K562 (cell line): ENCODE measurements at regions of chr15 and their contacts with region 1.

Region 1: GRCh38 chr15:88664151-88664778 is 25.4 kb downstream of the ISG20 start:
- DNase-seq: no peak
- ATAC-seq: peak; percentile 51; the same call in 1 of the 3 replicates
- H3K4me3 ChIP-seq: no peak overlapping the region
- H3K27ac ChIP-seq: no peak overlapping the region
- H3K4me1 ChIP-seq: no peaks in the 10 kb centered on the region
- H3K27me3 ChIP-seq: peaks cover 4 to 21% of the 10 kb centered on the region in 2 experiments; a peak in 4 of 5 replicates
- CTCF ChIP-seq: peak in 2 of 3 experiments; percentile 22 to 34; a peak in 1 of 6 replicates
- EP300 ChIP-seq: no peak
- POLR2A ChIP-seq: no peak
- RAD21 ChIP-seq: peak in 1 of 2 experiments; percentile 51; a peak in 2 of 4 replicates

Region 2: GRCh38 chr15:88828791-88829190 is 164.5 kb after region 1 on chr15:
- CTCF ChIA-PET with region 1: no interaction called
- POLR2A ChIA-PET with region 1: no interaction called
- in situ Hi-C with region 1: loop called (anchors 10 kb)
- intact Hi-C with region 1: no loop called
- DNase-seq: no peak
- ATAC-seq: no peak
- H3K4me3 ChIP-seq: no peak overlapping the region
- H3K27ac ChIP-seq: no peak overlapping the region
- H3K4me1 ChIP-seq: no peaks in the 10 kb centered on the region
- H3K27me3 ChIP-seq: peaks cover 10 to 40% of the 10 kb centered on the region in 2 experiments; a peak in 3 of 5 replicates
- CTCF ChIP-seq: no peak
- EP300 ChIP-seq: no peak
- POLR2A ChIP-seq: no peak
- RAD21 ChIP-seq: no peak